AG04450 (cell line): ENCODE measurements at regions of chr18 and their contacts with region 1.

Region 1: GRCh38 chr18:74551936-74552555 is 17.7 kb downstream of the CNDP1 start:
- DNase-seq: peak; percentile 54
- H3K4me3 ChIP-seq: no peak overlapping the region
- H3K27ac ChIP-seq: no peak overlapping the region
- H3K27me3 ChIP-seq: peaks cover 9% of the 10 kb centered on the region
- CTCF ChIP-seq: peak; percentile 90

Region 2: GRCh38 chr18:74081966-74082741 is 469.9 kb before region 1 on chr18:
- CTCF ChIA-PET with region 1: interaction called, 11 read pairs
- POLR2A ChIA-PET with region 1: no interaction called
- DNase-seq: no peak
- H3K4me3 ChIP-seq: no peak overlapping the region
- H3K27ac ChIP-seq: no peak overlapping the region
- H3K27me3 ChIP-seq: peaks cover 10% of the 10 kb centered on the region
- CTCF ChIP-seq: peak; percentile 62

Region 3: GRCh38 chr18:74196220-74197119 is 355.6 kb before region 1 on chr18:
- CTCF ChIA-PET with region 1: interaction called, 27 read pairs
- POLR2A ChIA-PET with region 1: no interaction called
- DNase-seq: peak; percentile 15
- H3K4me3 ChIP-seq: peak overlapping the region; percentile 43
- H3K27ac ChIP-seq: no peak overlapping the region
- H3K27me3 ChIP-seq: peaks cover 3% of the 10 kb centered on the region
- CTCF ChIP-seq: peak; percentile 86

Region 4: GRCh38 chr18:74353169-74353775 is 198.8 kb before region 1 on chr18:
- CTCF ChIA-PET with region 1: interaction called, 128 read pairs
- POLR2A ChIA-PET with region 1: interaction called, 3 read pairs
- DNase-seq: peak; percentile 18
- H3K4me3 ChIP-seq: no peak overlapping the region
- H3K27ac ChIP-seq: no peak overlapping the region
- H3K27me3 ChIP-seq: peaks cover 5% of the 10 kb centered on the region
- CTCF ChIP-seq: peak; percentile 86

Region 5: GRCh38 chr18:74495581-74496507 is 56.2 kb before region 1 on chr18 and contains the start of gene CNDP2:
- CTCF ChIA-PET with region 1: interaction called, 13 read pairs
- POLR2A ChIA-PET with region 1: no interaction called
- DNase-seq: peak; percentile 95
- H3K4me3 ChIP-seq: peak within 1 kb of the TSS; percentile 93
- H3K27ac ChIP-seq: peak within 1 kb of the TSS; percentile 52
- H3K27me3 ChIP-seq: peaks cover 7% of the 10 kb centered on the region
- CTCF ChIP-seq: no peak
- polyA plus RNA-seq, gene CNDP2: 74.1 and 74.2 TPM in 2 replicates

Region 6: GRCh38 chr18:74562131-74562730 is 10.2 kb after region 1 on chr18:
- CTCF ChIA-PET with region 1: interaction called, 11 read pairs
- POLR2A ChIA-PET with region 1: no interaction called
- DNase-seq: no peak
- H3K4me3 ChIP-seq: no peak overlapping the region
- H3K27ac ChIP-seq: no peak overlapping the region
- H3K27me3 ChIP-seq: peaks cover 11% of the 10 kb centered on the region
- CTCF ChIP-seq: no peak

Region 7: DNA sequence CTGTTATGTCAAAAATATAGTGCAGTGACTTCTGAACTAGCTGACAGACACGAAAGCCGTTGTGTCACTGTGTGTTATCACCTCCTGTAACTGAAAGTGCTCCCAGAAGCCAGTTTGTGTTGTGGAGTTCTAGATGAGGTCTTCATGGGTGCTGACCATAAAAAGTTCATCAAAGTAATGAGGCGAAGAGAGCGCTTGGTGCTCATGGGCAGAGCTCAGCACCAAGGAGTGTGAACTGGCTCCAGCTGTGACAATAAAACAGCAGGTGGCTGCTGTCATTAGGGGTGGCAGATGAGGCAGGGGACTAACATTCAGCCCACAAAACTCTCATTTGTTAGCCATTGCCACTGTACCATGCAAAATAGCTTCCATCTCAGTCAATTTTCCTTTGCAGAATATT is 196.8 kb after region 1 on chr18:
- CTCF ChIA-PET with region 1: no interaction called
- POLR2A ChIA-PET with region 1: no interaction called
- DNase-seq: no peak
- H3K4me3 ChIP-seq: no peak overlapping the region
- H3K27ac ChIP-seq: no peak overlapping the region
- H3K27me3 ChIP-seq: no peaks in the 10 kb centered on the region
- CTCF ChIP-seq: no peak

Region 8: DNA sequence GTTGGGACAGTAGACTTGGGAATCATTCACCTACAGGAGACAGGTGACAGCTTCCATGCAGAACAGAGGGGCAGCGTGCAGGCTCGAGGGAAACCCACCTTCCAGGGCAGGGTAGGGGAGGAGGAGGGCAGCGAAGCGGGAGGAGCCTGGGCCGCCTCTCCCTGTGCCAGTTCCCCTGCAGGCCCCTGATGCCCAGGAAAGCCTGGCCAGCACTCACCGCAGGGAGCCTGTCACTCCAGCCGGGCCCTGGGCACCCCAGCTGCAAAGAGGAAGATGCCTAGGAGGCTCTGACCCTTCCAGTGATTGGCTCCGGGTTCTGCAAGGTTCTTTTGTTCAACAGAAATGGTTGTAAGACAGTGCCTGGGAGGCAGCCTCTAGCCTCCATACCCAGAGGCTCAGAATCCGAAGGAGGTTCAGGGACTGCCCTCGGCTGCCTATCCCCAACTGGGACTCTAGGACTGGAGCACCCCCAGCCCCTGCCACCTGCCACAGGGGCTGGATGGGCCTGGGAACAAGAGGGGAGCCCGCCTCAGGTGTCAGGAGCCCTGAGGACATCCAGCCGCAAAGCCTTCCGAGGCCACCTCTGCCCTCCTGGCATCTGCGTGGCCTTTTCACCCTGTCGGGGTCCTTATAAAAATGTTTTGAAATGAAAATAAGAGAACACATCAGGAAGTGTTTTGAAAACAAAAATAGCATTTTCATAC is 553.7 kb after region 1 on chr18:
- CTCF ChIA-PET with region 1: no interaction called
- POLR2A ChIA-PET with region 1: no interaction called
- DNase-seq: no peak
- H3K4me3 ChIP-seq: no peak overlapping the region
- H3K27ac ChIP-seq: no peak overlapping the region
- H3K27me3 ChIP-seq: peaks cover 14% of the 10 kb centered on the region
- CTCF ChIP-seq: no peak

Region 9: GRCh38 chr18:75247611-75248421 is 695.8 kb after region 1 on chr18:
- CTCF ChIA-PET with region 1: no interaction called
- POLR2A ChIA-PET with region 1: no interaction called
- DNase-seq: no peak
- H3K4me3 ChIP-seq: peak overlapping the region; percentile 55
- H3K27ac ChIP-seq: peak overlapping the region; percentile 69
- H3K27me3 ChIP-seq: no peaks in the 10 kb centered on the region
- CTCF ChIP-seq: no peak